ENCODE measurements at regions of chr17 and their contacts with region 1.

Region 1: GRCh38 chr17:62179534-62180151 is 114.6 kb upstream of the MED13 start:
- DNase-seq: peak; percentile 95
- H3K4me3 ChIP-seq: no peak overlapping the region
- H3K27ac ChIP-seq: peak overlapping the region; percentile 15
- H3K4me1 ChIP-seq: peaks cover 10% of the 10 kb centered on the region
- H3K27me3 ChIP-seq: no peaks in the 10 kb centered on the region
- CTCF ChIP-seq: peak; percentile 47; the same call in 1 of the 2 replicates

Region 2: GRCh38 chr17:62017610-62018261 is 161.9 kb before region 1 on chr17:
- CTCF ChIA-PET with region 1: no interaction called
- POLR2A ChIA-PET with region 1: interaction called, 10 read pairs
- intact Hi-C with region 1: no loop called
- DNase-seq: no peak
- H3K4me3 ChIP-seq: no peak overlapping the region
- H3K27ac ChIP-seq: no peak overlapping the region
- H3K4me1 ChIP-seq: no peaks in the 10 kb centered on the region
- H3K27me3 ChIP-seq: no peaks in the 10 kb centered on the region
- CTCF ChIP-seq: no peak

Region 3: GRCh38 chr17:62405451-62405850 is 225.8 kb after region 1 on chr17:
- CTCF ChIA-PET with region 1: no interaction called
- POLR2A ChIA-PET with region 1: no interaction called
- intact Hi-C with region 1: no loop called
- DNase-seq: no peak
- H3K4me3 ChIP-seq: no peak overlapping the region
- H3K27ac ChIP-seq: no peak overlapping the region
- H3K4me1 ChIP-seq: no peaks in the 10 kb centered on the region
- H3K27me3 ChIP-seq: no peaks in the 10 kb centered on the region
- CTCF ChIP-seq: no peak

Region 4: GRCh38 chr17:62968445-62968923 is 788.8 kb after region 1 on chr17:
- CTCF ChIA-PET with region 1: interaction called, 13 read pairs
- POLR2A ChIA-PET with region 1: no interaction called
- intact Hi-C with region 1: no loop called
- DNase-seq: peak; percentile 87
- H3K4me3 ChIP-seq: no peak overlapping the region
- H3K27ac ChIP-seq: no peak overlapping the region
- H3K4me1 ChIP-seq: peaks cover 7% of the 10 kb centered on the region
- H3K27me3 ChIP-seq: peaks cover 4% of the 10 kb centered on the region
- CTCF ChIP-seq: peak; percentile 87

Measured in A673 (cell line).